ENCODE measurements at regions of chrX and their contacts with region 1.

Region 1: GRCh38 chrX:3811331-3812311 is 98.2 kb upstream of the PRKX start:
- DNase-seq: peak; percentile 72
- H3K4me3 ChIP-seq: peak overlapping the region in 1 of 8 donors; percentile 11
- H3K27ac ChIP-seq: no peak overlapping the region
- H3K4me1 ChIP-seq: peaks cover 0 to 25% (median 11%) of the 10 kb centered on the region in 6 donors
- H3K27me3 ChIP-seq: peaks cover 0 to 25% (median 3%) of the 10 kb centered on the region in 7 donors
- CTCF ChIP-seq: peak in 9 of 11 experiments; percentile 49 to 70 (median 57)
- POLR2A ChIP-seq: no peak

Region 2: GRCh38 chrX:3589474-3589873 is 222.1 kb before region 1 on chrX:
- intact Hi-C with region 1: no loop called
- DNase-seq: no peak
- H3K4me3 ChIP-seq: no peak overlapping the region
- H3K27ac ChIP-seq: no peak overlapping the region
- H3K4me1 ChIP-seq: no peaks in the 10 kb centered on the region
- H3K27me3 ChIP-seq: no peaks in the 10 kb centered on the region
- CTCF ChIP-seq: no peak
- POLR2A ChIP-seq: no peak

Region 3: DNA sequence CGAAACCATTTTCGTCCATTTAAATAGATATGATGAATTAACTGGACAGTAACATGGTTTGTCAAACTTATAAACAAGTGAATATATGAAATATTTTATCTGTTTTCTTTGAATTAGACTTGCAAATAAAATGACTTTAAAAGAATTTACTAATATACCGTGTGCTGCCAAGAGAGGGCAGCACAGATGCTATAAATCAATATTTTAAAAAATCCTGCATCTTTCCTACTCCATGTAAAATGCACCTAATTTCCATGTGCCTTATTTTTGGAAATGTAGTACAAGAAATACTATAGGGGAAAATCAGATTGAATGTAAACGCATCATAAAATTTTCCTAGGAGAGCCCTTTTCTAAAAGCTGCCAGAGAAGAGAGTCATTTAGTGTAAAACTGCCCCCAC is 160.3 kb before region 1 on chrX:
- intact Hi-C with region 1: loop called (anchors 5 kb)
- DNase-seq: no peak
- H3K4me3 ChIP-seq: no peak overlapping the region
- H3K27ac ChIP-seq: no peak overlapping the region
- H3K4me1 ChIP-seq: no peaks in the 10 kb centered on the region
- H3K27me3 ChIP-seq: no peaks in the 10 kb centered on the region
- CTCF ChIP-seq: peak in 9 of 11 experiments; percentile 5 to 58 (median 47)
- POLR2A ChIP-seq: no peak

Region 4: GRCh38 chrX:3728454-3728853 is 83.2 kb before region 1 on chrX:
- intact Hi-C with region 1: no loop called
- DNase-seq: no peak
- H3K4me3 ChIP-seq: no peak overlapping the region
- H3K27ac ChIP-seq: no peak overlapping the region
- H3K4me1 ChIP-seq: no peaks in the 10 kb centered on the region
- H3K27me3 ChIP-seq: no peaks in the 10 kb centered on the region
- CTCF ChIP-seq: no peak
- POLR2A ChIP-seq: no peak

Region 5: GRCh38 chrX:3757510-3758025 is 54.1 kb before region 1 on chrX:
- intact Hi-C with region 1: no loop called
- DNase-seq: no peak
- H3K4me3 ChIP-seq: no peak overlapping the region
- H3K27ac ChIP-seq: no peak overlapping the region
- H3K4me1 ChIP-seq: no peaks in the 10 kb centered on the region
- H3K27me3 ChIP-seq: no peaks in the 10 kb centered on the region
- CTCF ChIP-seq: no peak
- POLR2A ChIP-seq: no peak

Region 6: DNA sequence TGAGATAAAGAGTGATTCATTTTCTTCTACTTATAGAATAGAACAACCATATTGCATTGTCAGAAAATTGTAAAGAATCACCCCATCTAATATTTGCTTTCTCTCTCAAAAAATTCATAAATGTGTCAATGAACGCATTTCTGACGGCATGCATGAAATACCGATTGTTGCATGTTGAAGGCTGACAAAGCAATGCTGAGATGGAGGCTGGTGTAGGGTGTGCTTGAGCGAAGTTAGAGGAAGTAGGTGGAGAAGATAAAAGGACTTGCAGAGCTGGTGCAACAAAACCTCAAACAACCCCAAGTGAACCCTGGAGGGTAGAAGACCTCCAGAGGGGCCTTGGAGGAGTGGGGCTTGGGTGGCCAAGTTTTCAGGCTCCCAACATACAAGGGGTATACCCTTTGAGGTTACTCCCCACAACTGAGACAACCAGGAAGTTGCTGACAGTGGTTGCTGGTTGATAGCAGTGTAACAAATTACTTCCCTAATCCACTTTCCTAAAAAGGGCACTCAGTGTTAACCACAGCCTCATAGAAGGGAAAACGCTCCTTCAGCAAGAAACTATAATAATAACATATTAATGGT is 1964.3 kb after region 1 on chrX:
- intact Hi-C with region 1: no loop called
- DNase-seq: no peak
- H3K4me3 ChIP-seq: no peak overlapping the region
- H3K27ac ChIP-seq: peak overlapping the region in 1 of 8 donors; percentile 40
- H3K4me1 ChIP-seq: no peaks in the 10 kb centered on the region
- H3K27me3 ChIP-seq: no peaks in the 10 kb centered on the region
- CTCF ChIP-seq: no peak
- POLR2A ChIP-seq: no peak